Vagina (tissue), 2 donors: ENCODE measurements at regions of chr1 and their contacts with region 1.

Region 1: GRCh38 chr1:15323351-15323988 is 76.4 kb downstream of the FHAD1 start:
- DNase-seq: no peak
- H3K4me3 ChIP-seq: no peak overlapping the region
- H3K27ac ChIP-seq: no peak overlapping the region
- H3K4me1 ChIP-seq: peaks cover 23% of the 10 kb centered on the region
- H3K27me3 ChIP-seq: no peaks in the 10 kb centered on the region
- CTCF ChIP-seq: peak; percentile 98 to 99 (median 99)
- POLR2A ChIP-seq: no peak

Region 2: GRCh38 chr1:15370781-15371520 is 47.5 kb after region 1 on chr1:
- intact Hi-C with region 1: no loop called
- DNase-seq: no peak
- H3K4me3 ChIP-seq: no peak overlapping the region
- H3K27ac ChIP-seq: no peak overlapping the region
- H3K4me1 ChIP-seq: peaks cover 15% of the 10 kb centered on the region
- H3K27me3 ChIP-seq: no peaks in the 10 kb centered on the region
- CTCF ChIP-seq: no peak
- POLR2A ChIP-seq: no peak

Region 3: GRCh38 chr1:15429701-15430149 is 106.3 kb after region 1 on chr1:
- intact Hi-C with region 1: loop called (anchors 2 kb)
- DNase-seq: no peak
- H3K4me3 ChIP-seq: no peak overlapping the region
- H3K27ac ChIP-seq: no peak overlapping the region
- H3K4me1 ChIP-seq: peaks cover 23% of the 10 kb centered on the region
- H3K27me3 ChIP-seq: no peaks in the 10 kb centered on the region
- CTCF ChIP-seq: no peak
- POLR2A ChIP-seq: no peak

Region 4: GRCh38 chr1:16677552-16678431 is 1354.3 kb after region 1 on chr1:
- intact Hi-C with region 1: loop called (anchors 10 kb)
- DNase-seq: no peak
- H3K4me3 ChIP-seq: no peak overlapping the region
- H3K27ac ChIP-seq: no peak overlapping the region
- H3K4me1 ChIP-seq: no peaks in the 10 kb centered on the region
- H3K27me3 ChIP-seq: no peaks in the 10 kb centered on the region
- CTCF ChIP-seq: no peak
- POLR2A ChIP-seq: no peak